Caco-2 (cell line): ENCODE measurements at regions of chr10 and their contacts with region 1.

Region 1: GRCh38 chr10:18713077-18713476 is 53.8 kb downstream of the ARL5B start:
- DNase-seq: peak in 1 of 2 experiments; percentile 49
- H3K4me3 ChIP-seq: no peak overlapping the region
- H3K4me3 Mint-ChIP-seq: no peak overlapping the region
- H3K27ac Mint-ChIP-seq: peak overlapping the region; percentile 60
- H3K4me1 ChIP-seq: peaks cover 7% of the 10 kb centered on the region; the same call in 1 of the 2 replicates
- H3K4me1 Mint-ChIP-seq: peaks cover 10% of the 10 kb centered on the region
- H3K27me3 ChIP-seq: no peaks in the 10 kb centered on the region
- H3K27me3 Mint-ChIP-seq: no peaks in the 10 kb centered on the region
- CTCF ChIP-seq: no peak

Region 2: GRCh38 chr10:19730167-19730906 is 1017.3 kb after region 1 on chr10:
- CTCF ChIA-PET with region 1: no interaction called
- POLR2A ChIA-PET with region 1: no interaction called
- intact Hi-C with region 1: loop called (anchors 5 kb)
- DNase-seq: no peak
- H3K4me3 ChIP-seq: no peak overlapping the region
- H3K4me3 Mint-ChIP-seq: no peak overlapping the region
- H3K27ac Mint-ChIP-seq: no peak overlapping the region
- H3K4me1 ChIP-seq: no peaks in the 10 kb centered on the region
- H3K4me1 Mint-ChIP-seq: no peaks in the 10 kb centered on the region
- H3K27me3 ChIP-seq: no peaks in the 10 kb centered on the region
- H3K27me3 Mint-ChIP-seq: no peaks in the 10 kb centered on the region
- CTCF ChIP-seq: no peak